Mammary epithelial cell (primary cell): ENCODE measurements at regions of chr2 and their contacts with region 1.

Region 1: DNA sequence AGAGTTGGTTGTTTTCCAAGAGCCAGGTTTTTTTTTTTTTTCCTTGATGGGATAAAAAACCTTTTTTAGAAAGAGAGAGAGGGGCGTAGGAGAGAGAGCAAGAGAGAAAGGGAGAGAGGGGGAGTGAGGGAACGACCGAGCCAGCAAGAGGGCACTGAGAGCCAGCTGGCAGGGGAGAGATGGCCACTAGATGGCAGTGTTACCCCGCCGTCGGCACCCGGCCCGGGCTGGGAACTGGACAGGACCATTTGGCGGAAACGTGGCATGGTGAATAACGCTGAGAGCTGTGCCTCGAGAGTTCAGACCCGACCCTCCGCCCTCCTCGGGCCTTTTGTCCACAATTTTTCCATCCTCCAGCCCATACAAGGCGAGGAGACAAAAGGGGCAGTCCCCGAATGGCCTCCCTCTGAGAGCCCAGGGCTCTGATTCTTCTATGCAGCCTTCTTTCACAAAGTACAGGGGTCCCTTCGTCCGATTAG is 286.7 kb upstream of the VRK2 start:
- DNase-seq: peak; percentile 58
- H3K4me3 ChIP-seq: peak overlapping the region; percentile 5 to 25 (median 24)
- H3K27ac ChIP-seq: no peak overlapping the region
- H3K4me1 ChIP-seq: peaks cover 3% of the 10 kb centered on the region
- H3K27me3 ChIP-seq: no peaks in the 10 kb centered on the region
- CTCF ChIP-seq: peak; percentile 65 to 96

Region 2: DNA sequence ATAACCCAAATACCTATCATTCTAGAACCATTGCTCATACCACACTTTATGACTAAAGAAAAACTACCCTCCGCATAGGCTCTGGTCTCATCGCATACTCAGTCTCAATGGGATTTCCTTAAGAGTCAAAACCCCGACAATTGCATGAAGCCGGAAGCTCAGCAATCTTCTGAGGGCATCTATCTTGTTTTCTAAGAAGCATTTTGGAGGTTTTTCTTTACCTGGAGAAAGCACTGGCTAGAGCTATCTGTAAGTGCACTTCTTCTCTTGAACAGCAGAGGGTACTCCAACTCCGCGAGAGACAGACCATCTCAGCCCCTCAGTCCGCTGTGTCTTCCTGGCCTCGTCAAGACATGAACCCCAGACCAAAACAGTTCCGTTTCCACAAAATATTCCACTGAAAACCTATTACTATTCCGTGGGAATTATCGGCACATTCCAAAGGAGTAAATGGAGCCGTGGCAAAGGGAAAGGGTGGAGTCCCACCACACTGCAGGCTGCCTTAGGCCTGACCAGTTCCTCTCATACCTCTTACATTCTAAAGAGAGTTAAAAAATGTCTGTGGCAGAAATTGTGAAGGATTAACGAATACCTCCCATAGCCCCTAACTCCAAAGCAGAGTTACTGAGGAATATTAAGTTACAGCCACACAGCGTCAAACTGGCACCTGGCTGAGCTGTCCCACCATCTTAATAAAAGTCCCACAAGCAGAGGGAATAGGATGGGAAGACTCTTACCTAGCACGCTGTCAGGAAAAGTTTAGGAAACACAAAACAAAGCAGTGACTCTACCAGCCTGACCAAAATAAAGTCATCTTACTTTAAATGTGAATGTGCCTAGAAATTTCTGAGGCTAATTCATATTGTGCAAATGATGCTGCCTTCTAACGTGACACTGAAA is 38.9 kb before region 1 on chr2:
- CTCF ChIA-PET with region 1: no interaction called
- dilution Hi-C with region 1: no loop called
- in situ Hi-C with region 1: no loop called
- intact Hi-C with region 1: loop called (anchors 5 kb)
- DNase-seq: peak; percentile 42
- H3K4me3 ChIP-seq: peak overlapping the region in 1 of 3 experiments; percentile 22
- H3K27ac ChIP-seq: no peak overlapping the region
- H3K4me1 ChIP-seq: peaks cover 5% of the 10 kb centered on the region
- H3K27me3 ChIP-seq: no peaks in the 10 kb centered on the region
- CTCF ChIP-seq: peak; percentile 71 to 84

Region 3: GRCh38 chr2:57828221-57828620 is 68.4 kb after region 1 on chr2:
- CTCF ChIA-PET with region 1: no interaction called
- dilution Hi-C with region 1: no loop called
- in situ Hi-C with region 1: no loop called
- intact Hi-C with region 1: no loop called
- DNase-seq: no peak
- H3K4me3 ChIP-seq: no peak overlapping the region
- H3K27ac ChIP-seq: no peak overlapping the region
- H3K4me1 ChIP-seq: no peaks in the 10 kb centered on the region
- H3K27me3 ChIP-seq: no peaks in the 10 kb centered on the region
- CTCF ChIP-seq: no peak

Region 4: GRCh38 chr2:58448065-58448507 is 688.2 kb after region 1 on chr2:
- CTCF ChIA-PET with region 1: interaction called, 8 read pairs
- dilution Hi-C with region 1: no loop called
- in situ Hi-C with region 1: loop called in 1 of 2 experiments (anchors 25 kb)
- intact Hi-C with region 1: loop called (anchors 1 kb)
- DNase-seq: peak; percentile 35
- H3K4me3 ChIP-seq: no peak overlapping the region
- H3K27ac ChIP-seq: no peak overlapping the region
- H3K4me1 ChIP-seq: peaks cover 7% of the 10 kb centered on the region
- H3K27me3 ChIP-seq: no peaks in the 10 kb centered on the region
- CTCF ChIP-seq: peak; percentile 53 to 67